Dorsolateral prefrontal cortex (tissue), 120 donors: ENCODE measurements at regions of chr3 and their contacts with region 1.

Region 1: GRCh38 chr3:107235928-107236315 is 141.3 kb upstream of the CCDC54 start:
- DNase-seq: peak in 4 of 10 donors; percentile 41 to 70 (median 51)
- H3K4me3 ChIP-seq: peak overlapping the region; percentile 30 to 76 (median 57)
- H3K27ac ChIP-seq: peak overlapping the region; percentile 49 to 99 (median 95)
- H3K27me3 ChIP-seq: no peaks in the 10 kb centered on the region
- CTCF ChIP-seq: peak; percentile 88 to 100 (median 94)

Region 2: DNA sequence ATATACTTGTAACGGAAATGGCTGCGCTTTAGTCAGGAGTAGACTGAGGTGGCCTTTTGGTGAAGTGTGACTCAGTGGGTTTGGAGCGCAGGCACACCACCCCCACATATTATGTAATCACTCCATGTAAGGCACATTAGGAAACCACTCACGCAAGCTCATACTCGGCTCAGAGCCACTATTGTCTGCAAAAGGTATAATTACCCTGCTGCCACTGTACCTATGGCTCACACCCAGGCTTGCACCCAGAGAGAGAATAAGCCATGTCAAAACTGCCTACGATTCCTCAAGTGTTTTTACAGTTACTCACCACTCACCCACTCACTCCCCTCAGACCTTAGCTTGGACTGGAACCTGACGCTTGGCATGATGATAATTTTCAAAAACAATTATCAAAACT is 470.6 kb before region 1 on chr3:
- intact Hi-C with region 1: no loop called
- DNase-seq: peak in 1 of 10 donors; percentile 13
- H3K4me3 ChIP-seq: no peak overlapping the region
- H3K27ac ChIP-seq: no peak overlapping the region
- H3K27me3 ChIP-seq: no peaks in the 10 kb centered on the region
- CTCF ChIP-seq: no peak

Region 3: DNA sequence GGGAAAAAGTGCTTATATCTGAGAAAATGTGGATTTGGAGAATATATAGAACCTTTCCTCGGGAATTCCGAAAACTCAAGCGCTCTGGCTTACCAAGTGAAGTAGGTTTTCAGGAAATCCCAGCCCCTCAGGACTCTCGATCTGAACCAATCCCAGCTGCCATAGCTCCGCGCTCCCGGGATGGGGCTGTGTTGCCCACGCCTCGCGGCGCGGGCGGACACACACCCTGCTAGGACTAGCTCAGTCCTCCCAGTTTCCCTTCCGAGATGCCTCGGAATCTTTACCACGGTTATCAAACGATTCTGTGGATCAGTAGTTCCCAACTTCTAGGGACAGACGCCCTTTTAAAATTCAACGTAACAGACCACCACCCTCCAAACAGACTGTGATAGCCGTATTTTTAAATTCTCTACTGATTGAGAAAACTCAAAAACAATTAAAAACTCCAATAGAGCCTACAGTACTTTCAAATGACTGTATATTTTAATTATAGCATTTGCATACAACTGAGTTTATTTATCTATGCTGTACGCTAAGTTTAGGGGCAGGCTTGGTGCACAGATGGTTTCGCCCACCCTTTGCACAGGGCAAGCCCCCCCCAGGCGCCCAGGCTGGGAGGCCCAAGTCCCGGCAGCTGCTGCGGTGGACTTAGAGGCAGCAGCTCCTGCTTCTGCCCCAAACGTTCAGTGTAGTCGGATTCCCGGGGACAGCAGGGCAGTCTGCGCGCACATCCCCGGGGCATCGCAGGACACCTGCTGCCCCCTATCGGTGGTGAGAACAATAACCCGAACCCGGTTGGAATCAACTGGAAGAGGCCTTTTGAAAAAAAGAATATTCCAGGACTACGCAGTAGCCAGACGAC is 193.6 kb after region 1 on chr3:
- intact Hi-C with region 1: loop called (anchors 1 to 2 kb)
- DNase-seq: peak; percentile 66 to 89 (median 82)
- H3K4me3 ChIP-seq: peak overlapping the region; percentile 57 to 93 (median 83)
- H3K27ac ChIP-seq: peak overlapping the region; percentile 90 to 100 (median 98)
- H3K27me3 ChIP-seq: no peaks in the 10 kb centered on the region
- CTCF ChIP-seq: peak; percentile 71 to 93 (median 85)

Region 4: DNA sequence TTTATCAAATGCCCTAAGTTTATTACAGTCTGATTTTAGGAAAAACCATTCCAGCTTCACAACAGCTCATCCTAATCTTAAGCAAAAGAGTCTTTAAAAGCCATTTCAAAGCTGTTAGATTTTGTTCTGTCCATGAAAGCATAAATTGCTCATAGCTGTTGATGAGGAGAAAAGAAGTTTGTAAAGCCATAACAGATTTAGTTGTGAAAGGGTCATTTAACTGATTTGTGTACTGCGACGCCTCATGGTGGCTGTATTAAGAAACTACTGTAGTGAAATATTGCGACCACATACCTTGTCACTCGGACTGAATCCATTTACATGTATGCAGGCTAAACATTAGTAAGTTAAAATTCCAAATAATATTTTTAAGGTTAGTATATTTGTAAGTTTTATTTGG is 307.7 kb after region 1 on chr3:
- intact Hi-C with region 1: loop called in 1 of 2 experiments (anchors 5 kb)
- DNase-seq: no peak
- H3K4me3 ChIP-seq: peak overlapping the region in 7 of 59 donors; percentile 0 to 18 (median 6)
- H3K27ac ChIP-seq: peak overlapping the region in 46 of 59 donors; percentile 3 to 85 (median 59)
- H3K27me3 ChIP-seq: no peaks in the 10 kb centered on the region
- CTCF ChIP-seq: peak in 54 of 56 donors; percentile 24 to 79 (median 58)

Region 5: GRCh38 chr3:107740992-107741896 is 505.3 kb after region 1 on chr3:
- intact Hi-C with region 1: loop called (anchors 5 to 10 kb)
- DNase-seq: no peak
- H3K4me3 ChIP-seq: no peak overlapping the region
- H3K27ac ChIP-seq: peak overlapping the region in 7 of 59 donors; percentile 2 to 34 (median 12)
- H3K27me3 ChIP-seq: no peaks in the 10 kb centered on the region
- CTCF ChIP-seq: peak; percentile 58 to 88 (median 72)

Region 6: DNA sequence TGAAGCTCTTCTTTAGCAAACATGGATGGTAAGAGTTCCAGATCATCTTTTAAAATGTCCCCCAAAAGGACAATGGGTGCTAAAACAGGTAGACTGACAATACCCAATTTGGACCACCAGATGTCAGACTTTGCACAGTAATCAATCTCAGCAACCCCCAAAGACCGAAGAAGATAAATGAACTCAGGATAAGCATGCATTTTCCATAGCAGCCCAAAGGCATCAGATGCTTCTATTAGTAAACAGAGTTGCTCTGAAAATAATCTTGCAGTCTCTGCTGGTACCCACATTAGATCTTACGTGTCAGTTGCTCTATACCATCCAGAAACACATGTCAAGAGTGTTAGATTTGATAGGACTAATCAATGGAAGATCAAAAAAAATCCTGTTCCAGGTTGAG is 1253.8 kb after region 1 on chr3:
- intact Hi-C with region 1: loop called in 1 of 2 experiments (anchors 10 kb)
- DNase-seq: peak in 1 of 10 donors; percentile 51
- H3K4me3 ChIP-seq: no peak overlapping the region
- H3K27ac ChIP-seq: peak overlapping the region in 1 of 59 donors; percentile 8
- H3K27me3 ChIP-seq: no peaks in the 10 kb centered on the region
- CTCF ChIP-seq: peak; percentile 60 to 96 (median 88)